Naive thymus-derived CD4-positive, alpha-beta T cell (primary cell): ENCODE measurements at regions of chr7 and their contacts with region 1.

Region 1: GRCh38 chr7:150404805-150405583 is 25.9 kb downstream of the ZNF775 start:
- DNase-seq: peak; percentile 65 to 81 (median 74)
- ATAC-seq: peak; percentile 87
- H3K4me3 ChIP-seq: peak overlapping the region; percentile 83
- H3K4me3 Mint-ChIP-seq: peak overlapping the region; percentile 91 to 100 (median 96)
- H3K27ac ChIP-seq: peak overlapping the region; percentile 91
- H3K27ac Mint-ChIP-seq: peak overlapping the region; percentile 92 to 99 (median 96)
- H3K4me1 ChIP-seq: peaks cover 14 to 21% of the 10 kb centered on the region in 2 donors
- H3K4me1 Mint-ChIP-seq: peaks cover 30 to 42% (median 37%) of the 10 kb centered on the region in 7 donors
- H3K27me3 ChIP-seq: no peaks in the 10 kb centered on the region
- H3K27me3 Mint-ChIP-seq: no peaks in the 10 kb centered on the region

Region 2: DNA sequence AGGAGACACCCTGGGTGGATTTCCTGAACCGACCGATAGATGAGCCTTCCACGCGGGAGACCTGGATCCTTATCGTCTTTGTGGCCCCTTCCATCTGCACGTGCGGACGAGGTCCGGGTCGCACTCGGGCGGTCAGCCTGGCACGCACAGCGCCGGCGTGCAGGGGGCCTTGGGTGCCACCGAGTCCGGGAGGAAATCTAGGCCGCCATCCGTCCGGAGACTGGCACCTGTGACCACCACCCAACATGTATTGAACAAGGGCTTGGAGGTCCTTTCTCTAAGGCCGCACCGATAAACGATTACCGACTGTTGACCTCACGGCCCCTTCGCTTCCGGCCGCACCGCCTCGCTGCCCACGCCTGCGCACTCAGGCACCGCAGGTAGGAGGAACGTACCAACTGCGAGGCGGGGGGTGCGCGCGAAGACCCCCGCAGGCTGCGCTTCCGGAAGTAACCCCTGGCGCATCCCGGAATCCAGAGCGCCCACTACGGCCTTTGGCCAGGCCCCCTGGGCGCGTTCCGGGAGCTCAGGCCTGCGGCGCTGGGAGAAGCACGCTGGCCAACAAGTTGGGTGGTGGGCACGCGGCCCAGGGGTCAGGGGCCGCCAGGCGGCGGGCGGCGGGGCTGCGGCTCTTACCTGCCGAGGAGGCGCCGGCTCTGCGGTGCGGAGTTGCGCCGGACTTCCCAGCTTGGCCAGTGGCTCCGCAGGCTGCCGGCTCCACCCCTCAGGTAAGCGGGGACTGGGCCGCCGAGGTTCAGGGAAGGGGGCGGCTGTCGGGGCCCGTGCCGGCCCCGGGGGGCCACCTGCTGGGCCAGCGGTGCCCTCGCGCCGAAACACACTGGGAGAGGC is 81.9 kb before region 1 on chr7 and contains the starts of genes ACTR3C and LRRC61:
- CTCF ChIA-PET with region 1: no interaction called
- POLR2A ChIA-PET with region 1: interaction called, 15 read pairs
- intact Hi-C with region 1: loop called (anchors 1 kb)
- DNase-seq: peak; percentile 23 to 75 (median 41)
- ATAC-seq: peak; percentile 67
- H3K4me3 ChIP-seq: peak within 1 kb of the TSS; percentile 95
- H3K4me3 Mint-ChIP-seq: peak within 1 kb of the TSS; percentile 88 to 100 (median 98)
- H3K27ac ChIP-seq: peak within 1 kb of the TSS; percentile 85
- H3K27ac Mint-ChIP-seq: peak within 1 kb of the TSS; percentile 94 to 99 (median 98)
- H3K4me1 ChIP-seq: peaks cover 5 to 21% of the 10 kb centered on the region in 2 donors
- H3K4me1 Mint-ChIP-seq: peaks cover 25 to 57% (median 44%) of the 10 kb centered on the region in 7 donors
- H3K27me3 ChIP-seq: no peaks in the 10 kb centered on the region
- H3K27me3 Mint-ChIP-seq: no peaks in the 10 kb centered on the region
- total RNA-seq, gene ACTR3C: 7.0 to 13.2 (median 10.6) TPM
- total RNA-seq, gene LRRC61: 8.3 to 30.0 (median 11.5) TPM

Region 3: DNA sequence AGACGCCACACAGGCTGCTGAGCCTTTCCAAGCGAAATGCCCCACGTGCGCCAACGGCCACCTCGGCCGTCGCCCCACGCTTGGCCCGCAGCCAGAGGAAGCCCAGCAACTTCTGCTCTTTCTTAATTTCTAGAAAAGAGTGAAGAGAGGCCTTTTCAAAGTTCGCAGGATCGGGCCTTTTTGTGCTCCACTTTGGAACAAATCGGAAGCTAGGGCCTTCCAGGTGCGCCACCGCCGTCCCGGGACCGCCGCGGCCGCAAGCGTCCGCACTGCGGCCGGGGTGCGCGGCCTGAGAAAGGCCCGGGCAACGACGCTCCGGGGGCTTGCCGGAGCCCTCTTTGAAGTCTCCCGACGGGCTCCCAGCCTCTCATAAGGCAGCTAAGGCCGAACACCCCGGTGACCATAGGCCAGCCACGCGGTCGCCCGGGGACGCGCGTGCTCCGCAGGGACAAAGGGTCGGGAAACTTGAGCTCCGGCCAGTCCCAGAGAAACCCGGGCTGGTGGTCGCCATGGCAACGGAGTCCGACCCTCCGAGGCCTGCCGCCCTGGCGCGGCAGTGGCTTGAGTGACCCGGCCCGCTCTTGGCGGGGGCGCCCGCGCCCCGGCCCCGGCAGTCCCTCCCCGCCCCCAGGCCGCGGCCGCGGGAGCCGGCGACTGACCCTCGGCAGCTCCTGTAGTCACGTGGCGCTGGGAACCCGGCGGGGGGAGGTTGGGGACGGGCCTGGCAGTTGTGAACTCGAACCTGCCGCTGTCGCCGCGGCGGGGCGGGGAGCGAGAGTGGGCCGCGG is 36.7 kb before region 1 on chr7 and contains the start of gene REPIN1:
- CTCF ChIA-PET with region 1: interaction called, 7 read pairs
- POLR2A ChIA-PET with region 1: interaction called, 62 read pairs
- intact Hi-C with region 1: loop called (anchors 1 kb)
- DNase-seq: peak; percentile 65 to 88 (median 80)
- ATAC-seq: peak; percentile 74
- H3K4me3 ChIP-seq: peak within 1 kb of the TSS; percentile 99
- H3K4me3 Mint-ChIP-seq: peak within 1 kb of the TSS; percentile 91 to 97 (median 95)
- H3K27ac ChIP-seq: peak within 1 kb of the TSS; percentile 83
- H3K27ac Mint-ChIP-seq: peak within 1 kb of the TSS; percentile 88 to 97 (median 95)
- H3K4me1 ChIP-seq: peaks cover 11 to 39% of the 10 kb centered on the region in 2 donors
- H3K4me1 Mint-ChIP-seq: peaks cover 24 to 67% (median 58%) of the 10 kb centered on the region in 7 donors
- H3K27me3 ChIP-seq: no peaks in the 10 kb centered on the region
- H3K27me3 Mint-ChIP-seq: no peaks in the 10 kb centered on the region
- total RNA-seq, gene REPIN1: 68.5 to 103 (median 79.7) TPM

Region 4: DNA sequence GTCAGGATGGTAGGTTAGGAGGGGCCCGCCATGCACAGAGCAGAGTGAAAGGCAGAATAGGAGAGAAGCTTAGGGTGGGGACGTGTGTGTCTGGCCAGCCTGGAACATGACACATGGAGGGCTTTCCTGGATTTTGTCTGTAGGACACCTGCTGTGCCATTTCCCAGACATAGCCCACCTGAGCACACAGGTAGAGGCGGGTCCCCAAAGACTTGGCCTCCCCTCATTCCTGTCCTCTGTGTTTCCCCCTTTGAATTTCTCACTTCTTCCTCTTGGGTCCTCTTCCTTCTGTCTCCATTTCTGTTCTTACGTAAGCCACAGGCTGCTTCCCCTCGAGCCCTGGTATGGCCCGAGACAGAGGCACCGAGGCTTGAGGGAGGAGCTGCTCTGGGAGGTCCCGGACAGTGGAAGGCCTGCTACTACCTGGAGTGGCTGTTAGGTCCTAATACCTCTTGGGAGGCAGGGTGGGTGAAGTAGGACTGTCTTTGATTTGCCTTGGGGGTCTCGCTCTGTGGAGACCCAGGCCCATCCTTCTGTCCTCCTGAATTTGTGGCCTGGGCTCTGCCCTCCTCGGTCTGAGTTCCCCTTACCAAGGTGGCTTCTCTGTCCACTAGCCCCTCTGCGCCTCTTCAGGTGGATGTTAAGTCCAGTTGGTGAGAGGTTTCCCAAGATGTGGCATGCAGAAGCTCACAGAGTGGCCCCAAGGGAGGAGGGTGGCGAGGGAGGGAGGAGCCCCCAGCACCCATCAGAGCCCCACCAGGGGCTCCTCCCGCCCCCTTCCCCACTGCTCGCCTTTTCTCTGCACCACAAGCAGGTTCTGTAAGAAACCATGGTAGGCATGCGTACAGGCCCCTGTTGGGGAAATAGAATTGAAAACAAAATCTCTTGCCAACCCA is 20.3 kb before region 1 on chr7:
- CTCF ChIA-PET with region 1: interaction called, 3 read pairs
- POLR2A ChIA-PET with region 1: interaction called, 10 read pairs
- intact Hi-C with region 1: loop called (anchors 1 kb)
- DNase-seq: no peak
- ATAC-seq: no peak
- H3K4me3 ChIP-seq: no peak overlapping the region
- H3K4me3 Mint-ChIP-seq: no peak overlapping the region
- H3K27ac ChIP-seq: no peak overlapping the region
- H3K27ac Mint-ChIP-seq: no peak overlapping the region
- H3K4me1 ChIP-seq: peaks cover 4 to 5% of the 10 kb centered on the region in 2 donors
- H3K4me1 Mint-ChIP-seq: peaks cover 8 to 24% (median 16%) of the 10 kb centered on the region in 7 donors
- H3K27me3 ChIP-seq: no peaks in the 10 kb centered on the region
- H3K27me3 Mint-ChIP-seq: no peaks in the 10 kb centered on the region

Region 5: GRCh38 chr7:150428671-150429451 is 23.9 kb after region 1 on chr7:
- CTCF ChIA-PET with region 1: no interaction called
- POLR2A ChIA-PET with region 1: no interaction called
- intact Hi-C with region 1: no loop called
- DNase-seq: no peak
- ATAC-seq: peak; percentile 50
- H3K4me3 ChIP-seq: no peak overlapping the region
- H3K4me3 Mint-ChIP-seq: no peak overlapping the region
- H3K27ac ChIP-seq: no peak overlapping the region
- H3K27ac Mint-ChIP-seq: peak overlapping the region in 1 of 9 donors; percentile 3
- H3K4me1 ChIP-seq: no peaks in the 10 kb centered on the region
- H3K4me1 Mint-ChIP-seq: peaks cover 0 to 24% (median 10%) of the 10 kb centered on the region in 7 donors
- H3K27me3 ChIP-seq: no peaks in the 10 kb centered on the region
- H3K27me3 Mint-ChIP-seq: peaks cover 0 to 4% (median 0%) of the 10 kb centered on the region in 5 donors

Region 6: GRCh38 chr7:150737265-150738055 is 332.5 kb after region 1 on chr7 and contains the start of gene GIMAP5:
- CTCF ChIA-PET with region 1: no interaction called
- POLR2A ChIA-PET with region 1: no interaction called
- intact Hi-C with region 1: no loop called
- DNase-seq: peak in 6 of 9 donors; percentile 47 to 57 (median 56)
- ATAC-seq: peak; percentile 79
- H3K4me3 ChIP-seq: peak within 1 kb of the TSS; percentile 84
- H3K4me3 Mint-ChIP-seq: peak within 1 kb of the TSS; percentile 90 to 100 (median 98)
- H3K27ac ChIP-seq: peak within 1 kb of the TSS; percentile 82
- H3K27ac Mint-ChIP-seq: peak within 1 kb of the TSS; percentile 87 to 99 (median 96)
- H3K4me1 ChIP-seq: peaks cover 49 to 56% of the 10 kb centered on the region in 2 donors
- H3K4me1 Mint-ChIP-seq: peaks cover 56 to 73% (median 65%) of the 10 kb centered on the region in 7 donors
- H3K27me3 ChIP-seq: no peaks in the 10 kb centered on the region
- H3K27me3 Mint-ChIP-seq: no peaks in the 10 kb centered on the region
- total RNA-seq, gene GIMAP5: 58.1 to 422 (median 214) TPM

Region 7: DNA sequence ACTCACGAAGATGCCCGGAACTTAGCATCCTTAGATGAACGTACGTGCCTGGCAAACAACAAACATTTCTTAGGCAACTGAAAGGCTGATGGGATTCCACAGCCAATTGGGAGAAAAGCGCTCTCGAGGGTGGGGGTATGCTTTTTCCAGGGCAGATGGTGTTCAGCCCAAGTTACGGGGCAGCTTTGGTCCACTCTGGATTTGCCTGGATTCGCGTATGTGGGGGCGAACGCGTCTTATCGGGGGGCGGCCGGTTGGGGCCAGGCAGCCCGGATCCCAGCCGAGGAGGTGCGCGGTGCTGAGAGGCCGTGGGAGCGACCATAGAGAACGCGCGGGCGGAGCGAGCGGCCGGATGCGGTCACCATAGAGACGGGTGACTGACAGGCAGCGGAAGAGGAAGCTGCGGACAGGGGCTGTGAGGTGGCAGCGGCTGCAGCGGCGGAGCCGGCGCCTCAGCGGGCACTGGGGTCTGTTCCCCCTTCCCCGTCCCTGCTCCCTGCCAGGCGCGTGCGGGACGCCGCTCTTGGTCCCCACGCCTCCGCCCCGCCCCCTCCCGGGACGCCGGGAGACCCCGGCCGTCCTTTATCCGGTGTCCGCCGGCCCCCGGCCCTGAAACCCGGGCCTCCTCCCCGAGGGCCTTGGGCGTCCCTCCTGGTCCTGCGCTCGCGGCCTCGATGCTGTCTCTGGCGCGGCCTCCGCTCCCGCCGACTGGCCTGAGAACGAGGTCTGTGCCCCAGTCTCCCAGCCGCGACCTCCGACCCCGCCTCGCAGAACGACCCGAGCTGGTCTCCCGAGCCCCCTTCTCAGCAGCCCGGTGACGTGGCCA is 827.3 kb after region 1 on chr7 and contains the start of gene CHPF2:
- CTCF ChIA-PET with region 1: no interaction called
- POLR2A ChIA-PET with region 1: no interaction called
- intact Hi-C with region 1: loop called (anchors 5 to 10 kb)
- DNase-seq: peak; percentile 74 to 91 (median 84)
- ATAC-seq: peak; percentile 94
- H3K4me3 ChIP-seq: peak within 1 kb of the TSS; percentile 90
- H3K4me3 Mint-ChIP-seq: peak within 1 kb of the TSS; percentile 93 to 100 (median 98)
- H3K27ac ChIP-seq: peak within 1 kb of the TSS; percentile 85
- H3K27ac Mint-ChIP-seq: peak within 1 kb of the TSS; percentile 87 to 99 (median 98)
- H3K4me1 ChIP-seq: peaks cover 19 to 23% of the 10 kb centered on the region in 2 donors
- H3K4me1 Mint-ChIP-seq: peaks cover 30 to 45% (median 39%) of the 10 kb centered on the region in 7 donors
- H3K27me3 ChIP-seq: no peaks in the 10 kb centered on the region
- H3K27me3 Mint-ChIP-seq: peaks cover 0 to 6% (median 0%) of the 10 kb centered on the region in 5 donors
- total RNA-seq, gene CHPF2: 32.3 to 45.8 (median 42.8) TPM